ENCODE measurements at regions of chr10 and their contacts with region 1.

Region 1: DNA sequence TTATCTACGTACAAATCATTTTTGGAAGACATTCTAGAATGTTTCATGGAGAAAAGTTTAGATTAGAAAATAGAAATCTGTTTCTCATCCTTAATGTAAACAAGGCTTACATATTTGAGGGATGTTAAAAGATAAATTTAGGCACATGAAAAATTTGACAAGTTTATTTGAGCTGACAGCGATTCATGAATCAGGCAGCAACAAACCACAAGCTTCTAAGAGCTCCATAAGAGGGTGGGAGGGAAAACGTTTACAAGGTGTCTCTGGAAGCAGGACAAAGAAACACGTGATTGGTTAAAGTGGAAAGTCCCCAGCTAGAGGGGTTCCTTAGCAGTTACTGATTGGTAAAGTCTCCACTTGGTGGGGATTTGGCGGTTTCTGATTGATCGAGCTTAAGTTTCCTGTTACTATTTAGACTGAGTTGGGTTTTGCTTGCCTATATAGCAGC is 228.9 kb upstream of the PITRM1 start:
- DNase-seq: no peak

Region 2: GRCh38 chr10:3452173-3452626 is 50.7 kb after region 1 on chr10:
- in situ Hi-C with region 1: loop called (anchors 5 kb)
- DNase-seq: no peak